Psoas muscle (tissue), 8 donors: ENCODE measurements at regions of chr14 and their contacts with region 1.

Region 1: DNA sequence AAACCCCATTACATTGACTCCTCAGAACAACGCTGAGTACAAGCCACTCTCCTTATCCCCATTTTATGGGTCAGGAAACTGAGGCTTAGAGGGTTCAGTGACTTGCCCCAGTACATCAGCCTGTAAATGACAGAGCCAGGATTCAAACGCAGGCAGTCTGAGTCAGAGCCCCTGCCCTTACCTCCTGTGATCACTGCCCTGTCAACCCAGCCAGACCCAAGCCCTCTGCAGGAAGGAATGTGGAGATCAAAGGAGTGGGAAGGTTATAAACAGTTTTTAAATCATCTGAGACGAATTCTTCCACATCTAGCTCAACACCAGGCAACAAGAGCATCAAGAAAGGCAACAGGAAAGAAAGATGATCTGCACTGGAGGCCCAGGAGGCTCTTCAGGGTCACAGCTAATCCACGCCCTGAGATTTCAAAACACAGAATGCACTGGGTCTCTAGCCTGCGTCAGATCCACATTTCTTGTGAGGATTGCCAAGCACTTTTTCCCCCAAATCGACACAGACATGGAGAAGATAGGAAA is 38.5 kb downstream of the SPTB start:
- DNase-seq: peak; percentile 63 to 84
- ATAC-seq: peak; percentile 76 to 82 (median 81)
- H3K4me3 ChIP-seq: peak overlapping the region; percentile 40
- H3K27ac ChIP-seq: peak overlapping the region; percentile 96
- H3K4me1 ChIP-seq: peaks cover 91% of the 10 kb centered on the region
- H3K27me3 ChIP-seq: no peaks in the 10 kb centered on the region
- CTCF ChIP-seq: peak; percentile 68

Region 2: DNA sequence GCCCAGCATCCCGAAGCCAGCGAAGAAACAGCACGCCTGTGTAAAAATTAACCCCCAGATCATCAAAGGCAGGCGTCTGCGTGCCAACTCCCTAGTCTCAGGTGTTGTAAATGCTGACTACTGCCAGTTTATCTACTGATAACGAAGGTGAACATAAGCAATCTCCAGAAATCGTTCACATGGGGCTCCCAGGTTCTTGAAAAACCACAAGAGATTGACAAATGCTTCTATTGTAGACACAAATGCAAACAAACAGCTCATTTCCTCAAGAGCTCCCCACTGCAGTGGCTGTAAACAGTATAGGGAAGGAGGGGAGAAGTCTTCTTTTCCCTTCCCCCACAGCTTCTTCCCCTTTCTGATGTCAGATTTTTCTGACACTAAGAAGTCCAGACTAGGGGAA is 142.3 kb before region 1 on chr14:
- intact Hi-C with region 1: no loop called
- DNase-seq: no peak
- ATAC-seq: no peak
- H3K4me3 ChIP-seq: no peak overlapping the region
- H3K27ac ChIP-seq: no peak overlapping the region
- H3K4me1 ChIP-seq: peaks cover 3% of the 10 kb centered on the region
- H3K27me3 ChIP-seq: peaks cover 0 to 12% (median 0%) of the 10 kb centered on the region in 3 donors
- CTCF ChIP-seq: no peak

Region 3: GRCh38 chr14:64879635-64880220 is 38.5 kb after region 1 on chr14 and contains the start of gene SPTB:
- intact Hi-C with region 1: loop called (anchors 1 to 5 kb)
- DNase-seq: peak; percentile 79 to 89
- ATAC-seq: peak; percentile 86 to 92 (median 88)
- H3K4me3 ChIP-seq: peak within 1 kb of the TSS; percentile 92
- H3K27ac ChIP-seq: peak within 1 kb of the TSS; percentile 98
- H3K4me1 ChIP-seq: peaks cover 25% of the 10 kb centered on the region
- H3K27me3 ChIP-seq: no peaks in the 10 kb centered on the region
- CTCF ChIP-seq: no peak
- total RNA-seq, gene SPTB: 374 to 540 (median 492) TPM